Naive thymus-derived CD4-positive, alpha-beta T cell (primary cell): ENCODE measurements at regions of chr12 and their contacts with region 1.

Region 1: GRCh38 chr12:120971299-120972179 is 6.8 kb upstream of the HNF1A start:
- DNase-seq: peak in 8 of 9 donors; percentile 25 to 75 (median 63)
- ATAC-seq: peak; percentile 95
- H3K4me3 ChIP-seq: no peak overlapping the region
- H3K4me3 Mint-ChIP-seq: no peak overlapping the region
- H3K27ac ChIP-seq: no peak overlapping the region
- H3K27ac Mint-ChIP-seq: peak overlapping the region in 1 of 9 donors; percentile 77
- H3K4me1 ChIP-seq: no peaks in the 10 kb centered on the region
- H3K4me1 Mint-ChIP-seq: peaks cover 0 to 8% (median 7%) of the 10 kb centered on the region in 7 donors
- H3K27me3 ChIP-seq: no peaks in the 10 kb centered on the region
- H3K27me3 Mint-ChIP-seq: peaks cover 0 to 3% (median 0%) of the 10 kb centered on the region in 5 donors

Region 2: DNA sequence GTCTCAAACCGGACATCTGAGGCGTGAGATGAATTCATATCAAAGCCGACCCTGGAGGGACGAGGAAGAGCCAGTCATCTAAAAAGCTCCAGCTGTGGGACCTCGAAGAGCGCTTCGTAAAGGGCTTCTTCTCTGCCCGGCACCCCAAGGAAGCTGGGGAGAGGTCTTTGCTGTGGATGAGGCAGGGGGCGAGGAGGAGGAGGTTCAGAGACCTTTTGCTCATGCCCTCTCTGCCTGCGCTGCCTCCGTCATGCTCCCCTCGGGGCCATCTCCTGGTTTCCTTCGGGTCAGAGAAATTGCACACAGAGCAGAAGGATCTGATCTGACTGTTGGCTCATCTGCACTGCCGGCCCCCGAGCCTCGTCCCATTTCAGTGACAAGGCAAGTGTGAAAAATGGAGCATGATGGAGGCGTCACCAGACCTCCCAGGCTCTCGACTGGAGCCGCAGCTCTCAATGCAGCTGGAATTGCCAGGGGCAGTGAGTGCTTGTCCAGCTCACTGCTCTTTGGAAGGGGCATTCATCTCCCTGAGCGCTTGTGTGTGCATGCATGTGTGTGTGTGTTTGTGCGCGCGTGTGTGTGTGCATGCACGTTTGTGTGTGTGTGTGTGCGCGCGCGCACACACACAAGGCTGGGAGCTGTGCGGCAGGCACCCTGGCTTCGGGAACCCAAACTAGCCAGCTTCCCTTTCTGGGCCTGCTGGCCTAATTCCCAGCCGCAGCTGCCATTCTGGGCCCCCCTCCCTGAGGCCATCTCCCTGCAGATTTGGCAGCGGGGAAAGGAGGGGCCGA is 321.9 kb before region 1 on chr12:
- CTCF ChIA-PET with region 1: interaction called, 26 read pairs
- POLR2A ChIA-PET with region 1: interaction called, 3 read pairs
- intact Hi-C with region 1: loop called in 1 of 2 experiments (anchors 1 kb)
- DNase-seq: no peak
- ATAC-seq: no peak
- H3K4me3 ChIP-seq: no peak overlapping the region
- H3K4me3 Mint-ChIP-seq: peak overlapping the region in 8 of 10 donors; percentile 31 to 78 (median 49)
- H3K27ac ChIP-seq: no peak overlapping the region
- H3K27ac Mint-ChIP-seq: no peak overlapping the region
- H3K4me1 ChIP-seq: peaks cover 6 to 7% of the 10 kb centered on the region in 2 donors
- H3K4me1 Mint-ChIP-seq: peaks cover 6 to 16% (median 13%) of the 10 kb centered on the region in 7 donors
- H3K27me3 ChIP-seq: peaks cover 3 to 5% of the 10 kb centered on the region in 2 donors
- H3K27me3 Mint-ChIP-seq: peaks cover 42 to 63% (median 58%) of the 10 kb centered on the region in 5 donors

Region 3: GRCh38 chr12:120710031-120710804 is 261.3 kb before region 1 on chr12 and contains the start of gene UNC119B:
- CTCF ChIA-PET with region 1: no interaction called
- POLR2A ChIA-PET with region 1: no interaction called
- intact Hi-C with region 1: loop called (anchors 1 to 10 kb)
- DNase-seq: peak; percentile 53 to 82 (median 69)
- ATAC-seq: peak; percentile 92
- H3K4me3 ChIP-seq: peak within 1 kb of the TSS; percentile 69
- H3K4me3 Mint-ChIP-seq: peak within 1 kb of the TSS; percentile 87 to 98 (median 95)
- H3K27ac ChIP-seq: peak within 1 kb of the TSS; percentile 83
- H3K27ac Mint-ChIP-seq: peak within 1 kb of the TSS; percentile 87 to 96 (median 92)
- H3K4me1 ChIP-seq: peaks cover 5 to 7% of the 10 kb centered on the region in 2 donors
- H3K4me1 Mint-ChIP-seq: peaks cover 20 to 40% (median 37%) of the 10 kb centered on the region in 7 donors
- H3K27me3 ChIP-seq: no peaks in the 10 kb centered on the region
- H3K27me3 Mint-ChIP-seq: no peaks in the 10 kb centered on the region
- total RNA-seq, gene UNC119B: 10.9 to 26.7 (median 18.8) TPM

Region 4: DNA sequence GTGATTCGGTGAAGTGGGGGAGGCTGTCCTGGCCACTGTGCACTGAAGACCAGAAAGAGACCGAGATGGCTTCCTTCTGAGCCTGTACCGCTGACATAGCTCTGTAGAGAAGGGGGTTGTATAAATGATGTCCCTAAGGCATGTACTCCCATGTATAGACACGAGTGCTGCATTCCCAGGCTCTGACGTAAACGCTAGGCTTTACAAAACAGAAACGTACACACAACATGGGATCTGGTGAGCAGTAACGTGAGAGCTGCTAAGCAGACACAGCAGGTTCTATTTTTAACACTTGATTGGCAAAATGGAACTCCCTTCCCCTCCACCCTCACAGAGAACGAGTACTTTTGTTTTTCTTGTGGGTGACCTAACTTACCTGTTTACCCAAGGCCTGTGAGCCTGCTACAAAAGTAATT is 210.0 kb before region 1 on chr12:
- CTCF ChIA-PET with region 1: no interaction called
- POLR2A ChIA-PET with region 1: no interaction called
- intact Hi-C with region 1: loop called in 1 of 2 experiments (anchors 2 kb)
- DNase-seq: peak in 6 of 9 donors; percentile 3 to 27 (median 14)
- ATAC-seq: peak; percentile 10
- H3K4me3 ChIP-seq: no peak overlapping the region
- H3K4me3 Mint-ChIP-seq: peak overlapping the region in 7 of 10 donors; percentile 39 to 76 (median 60)
- H3K27ac ChIP-seq: peak overlapping the region; percentile 52
- H3K27ac Mint-ChIP-seq: peak overlapping the region; percentile 58 to 98 (median 87)
- H3K4me1 ChIP-seq: no peaks in the 10 kb centered on the region
- H3K4me1 Mint-ChIP-seq: peaks cover 0 to 32% (median 19%) of the 10 kb centered on the region in 7 donors
- H3K27me3 ChIP-seq: no peaks in the 10 kb centered on the region
- H3K27me3 Mint-ChIP-seq: no peaks in the 10 kb centered on the region

Region 5: DNA sequence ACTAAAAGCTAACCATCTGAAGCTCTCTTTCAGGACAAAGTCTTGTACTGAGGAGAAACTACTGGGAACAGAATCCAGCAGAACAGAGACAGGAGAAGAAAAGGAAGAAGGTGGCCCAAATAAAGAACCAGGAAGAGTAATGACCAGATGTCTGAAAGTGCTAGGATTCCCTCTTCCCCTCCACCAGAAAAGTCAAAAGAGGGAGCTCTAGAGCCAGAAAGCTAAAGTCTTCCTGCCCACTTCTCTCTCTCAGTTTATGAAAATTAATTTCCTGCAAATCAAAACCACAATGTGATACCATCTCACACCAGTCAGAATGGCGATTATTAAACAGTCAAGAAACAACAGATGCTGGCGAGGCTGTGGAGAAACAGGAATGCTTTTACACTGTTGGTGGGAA is 114.6 kb before region 1 on chr12:
- CTCF ChIA-PET with region 1: interaction called, 8 read pairs
- POLR2A ChIA-PET with region 1: interaction called, 3 read pairs
- intact Hi-C with region 1: loop called in 1 of 2 experiments (anchors 1 kb)
- DNase-seq: peak in 1 of 9 donors; percentile 10
- ATAC-seq: peak; percentile 46
- H3K4me3 ChIP-seq: no peak overlapping the region
- H3K4me3 Mint-ChIP-seq: peak overlapping the region in 9 of 10 donors; percentile 3 to 81 (median 71)
- H3K27ac ChIP-seq: no peak overlapping the region
- H3K27ac Mint-ChIP-seq: peak overlapping the region in 5 of 9 donors; percentile 3 to 83 (median 59)
- H3K4me1 ChIP-seq: peaks cover 15 to 25% of the 10 kb centered on the region in 2 donors
- H3K4me1 Mint-ChIP-seq: peaks cover 35 to 71% (median 58%) of the 10 kb centered on the region in 7 donors
- H3K27me3 ChIP-seq: no peaks in the 10 kb centered on the region
- H3K27me3 Mint-ChIP-seq: no peaks in the 10 kb centered on the region

Region 6: DNA sequence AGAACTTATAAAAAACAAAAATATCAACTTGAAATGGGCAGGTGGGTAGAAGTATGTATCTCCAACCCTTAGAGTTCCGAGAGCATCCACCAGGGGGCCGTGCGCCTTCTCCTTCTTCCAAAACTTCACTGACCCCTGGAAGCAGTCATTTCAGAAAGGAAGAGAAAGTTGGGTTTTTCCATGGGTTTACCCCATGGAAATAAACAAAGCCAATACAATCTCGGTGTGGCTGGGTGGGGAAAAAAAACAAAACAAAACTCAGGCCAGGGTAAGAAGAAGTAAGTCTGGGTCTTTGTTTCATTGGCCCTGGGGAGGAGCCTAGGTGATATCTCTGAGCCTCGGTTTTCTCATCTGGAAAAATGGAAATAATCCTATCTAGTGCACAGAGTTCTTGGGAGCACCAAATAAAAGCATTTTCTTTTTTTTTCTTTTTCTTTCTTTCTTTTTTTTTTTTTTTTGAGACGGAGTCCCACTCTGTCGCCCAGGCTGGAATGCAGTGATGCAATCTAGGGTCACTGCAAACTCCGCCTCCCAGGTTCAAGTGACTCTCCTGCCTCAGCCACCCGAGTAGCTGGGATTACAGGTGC is 26.8 kb before region 1 on chr12:
- CTCF ChIA-PET with region 1: interaction called, 19 read pairs
- POLR2A ChIA-PET with region 1: no interaction called
- intact Hi-C with region 1: loop called (anchors 1 kb)
- DNase-seq: peak; percentile 34 to 71 (median 50)
- ATAC-seq: peak; percentile 60
- H3K4me3 ChIP-seq: no peak overlapping the region
- H3K4me3 Mint-ChIP-seq: no peak overlapping the region
- H3K27ac ChIP-seq: no peak overlapping the region
- H3K27ac Mint-ChIP-seq: peak overlapping the region in 2 of 9 donors; percentile 1 to 30
- H3K4me1 ChIP-seq: no peaks in the 10 kb centered on the region
- H3K4me1 Mint-ChIP-seq: peaks cover 0 to 6% (median 2%) of the 10 kb centered on the region in 7 donors
- H3K27me3 ChIP-seq: no peaks in the 10 kb centered on the region
- H3K27me3 Mint-ChIP-seq: peaks cover 0 to 8% (median 0%) of the 10 kb centered on the region in 5 donors

Region 7: DNA sequence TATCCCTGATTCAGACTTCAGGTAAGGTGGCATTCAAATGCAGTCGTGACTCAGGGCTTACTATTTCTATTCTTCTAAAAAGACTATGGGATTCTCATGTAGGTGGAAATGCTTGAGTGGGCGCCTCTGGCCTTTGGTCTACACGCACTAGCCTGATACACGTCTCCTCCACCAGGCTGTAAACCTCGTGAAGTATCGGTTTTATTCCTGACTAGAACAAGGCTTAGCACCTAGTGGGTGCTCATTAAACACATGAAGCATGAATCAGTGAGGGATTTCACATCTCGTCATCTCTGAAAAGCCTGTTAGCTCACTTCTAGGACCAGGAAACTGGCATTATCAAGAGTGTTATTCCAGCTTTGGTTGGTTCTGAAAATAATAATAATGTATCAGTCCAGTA is 10.9 kb before region 1 on chr12:
- CTCF ChIA-PET with region 1: interaction called, 13 read pairs
- POLR2A ChIA-PET with region 1: interaction called, 3 read pairs
- intact Hi-C with region 1: loop called (anchors 1 kb)
- DNase-seq: no peak
- ATAC-seq: no peak
- H3K4me3 ChIP-seq: no peak overlapping the region
- H3K4me3 Mint-ChIP-seq: peak overlapping the region in 2 of 10 donors; percentile 26 to 48
- H3K27ac ChIP-seq: no peak overlapping the region
- H3K27ac Mint-ChIP-seq: peak overlapping the region in 3 of 9 donors; percentile 55 to 89 (median 58)
- H3K4me1 ChIP-seq: peaks cover 2 to 20% of the 10 kb centered on the region in 2 donors
- H3K4me1 Mint-ChIP-seq: peaks cover 3 to 26% (median 20%) of the 10 kb centered on the region in 7 donors
- H3K27me3 ChIP-seq: no peaks in the 10 kb centered on the region
- H3K27me3 Mint-ChIP-seq: no peaks in the 10 kb centered on the region

Region 8: DNA sequence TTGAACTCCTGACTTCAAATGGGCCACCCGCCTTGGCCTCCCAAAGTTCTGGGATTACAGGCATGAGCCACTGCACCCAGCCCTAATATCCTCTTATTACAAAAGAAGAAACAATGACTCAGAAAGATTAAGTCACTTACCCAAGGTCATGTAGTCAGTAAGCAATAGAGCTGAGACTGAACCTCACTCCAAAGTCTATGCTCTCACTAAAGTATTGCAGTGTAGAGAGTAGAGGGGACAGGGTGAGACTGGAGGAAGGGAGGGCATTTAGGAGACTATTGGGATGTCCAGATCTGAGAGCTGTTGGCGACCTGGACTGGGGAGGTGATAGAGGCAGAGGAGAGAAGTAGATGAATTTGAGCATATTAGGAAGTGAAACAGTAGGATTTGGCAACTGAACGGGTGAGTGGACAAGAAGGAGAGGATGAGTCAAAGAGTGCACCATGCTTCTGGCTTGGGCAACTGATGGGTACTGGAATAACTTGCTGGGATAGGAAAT is 172.9 kb after region 1 on chr12:
- CTCF ChIA-PET with region 1: no interaction called
- POLR2A ChIA-PET with region 1: no interaction called
- intact Hi-C with region 1: no loop called
- DNase-seq: peak in 1 of 9 donors; percentile 10
- ATAC-seq: peak; percentile 72
- H3K4me3 ChIP-seq: no peak overlapping the region
- H3K4me3 Mint-ChIP-seq: peak overlapping the region in 2 of 10 donors; percentile 47 to 60
- H3K27ac ChIP-seq: no peak overlapping the region
- H3K27ac Mint-ChIP-seq: peak overlapping the region in 6 of 9 donors; percentile 1 to 87 (median 30)
- H3K4me1 ChIP-seq: no peaks in the 10 kb centered on the region
- H3K4me1 Mint-ChIP-seq: peaks cover 14 to 30% (median 19%) of the 10 kb centered on the region in 7 donors
- H3K27me3 ChIP-seq: no peaks in the 10 kb centered on the region
- H3K27me3 Mint-ChIP-seq: no peaks in the 10 kb centered on the region